ENCODE measurements at regions of chr5 and their contacts with region 1.

Region 1: DNA sequence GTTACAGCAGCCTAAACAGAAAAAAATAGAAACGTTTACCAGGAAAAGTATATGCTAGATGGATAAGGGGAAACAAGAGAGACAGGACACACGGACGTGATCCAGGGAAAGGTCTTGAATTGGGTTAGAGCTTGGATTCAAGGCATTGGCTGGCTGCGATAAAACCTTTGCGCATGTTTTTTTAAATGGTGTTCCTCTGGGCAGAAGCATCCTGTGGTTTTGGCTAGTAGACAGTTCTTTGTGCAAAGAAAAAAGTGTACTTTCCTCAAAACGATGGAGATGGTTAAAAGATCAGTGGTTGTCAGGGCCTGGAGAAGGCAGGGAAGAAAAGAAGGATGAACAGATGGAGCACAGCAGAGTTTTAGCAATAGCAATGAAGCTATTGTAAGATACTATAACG is 37.5 kb upstream of the LIFR start:
- DNase-seq: no peak
- H3K4me3 ChIP-seq: no peak overlapping the region
- H3K27ac ChIP-seq: no peak overlapping the region
- H3K4me1 ChIP-seq: no peaks in the 10 kb centered on the region
- H3K27me3 ChIP-seq: no peaks in the 10 kb centered on the region
- CTCF ChIP-seq: no peak
- EP300 ChIP-seq: no peak
- POLR2A ChIP-seq: no peak

Region 2: GRCh38 chr5:38621840-38622437 is 28.0 kb after region 1 on chr5:
- intact Hi-C with region 1: loop called in 1 of 4 experiments (anchors 1 kb)
- DNase-seq: no peak
- H3K4me3 ChIP-seq: no peak overlapping the region
- H3K27ac ChIP-seq: no peak overlapping the region
- H3K4me1 ChIP-seq: no peaks in the 10 kb centered on the region
- H3K27me3 ChIP-seq: no peaks in the 10 kb centered on the region
- CTCF ChIP-seq: no peak
- EP300 ChIP-seq: no peak
- POLR2A ChIP-seq: no peak

Region 3: DNA sequence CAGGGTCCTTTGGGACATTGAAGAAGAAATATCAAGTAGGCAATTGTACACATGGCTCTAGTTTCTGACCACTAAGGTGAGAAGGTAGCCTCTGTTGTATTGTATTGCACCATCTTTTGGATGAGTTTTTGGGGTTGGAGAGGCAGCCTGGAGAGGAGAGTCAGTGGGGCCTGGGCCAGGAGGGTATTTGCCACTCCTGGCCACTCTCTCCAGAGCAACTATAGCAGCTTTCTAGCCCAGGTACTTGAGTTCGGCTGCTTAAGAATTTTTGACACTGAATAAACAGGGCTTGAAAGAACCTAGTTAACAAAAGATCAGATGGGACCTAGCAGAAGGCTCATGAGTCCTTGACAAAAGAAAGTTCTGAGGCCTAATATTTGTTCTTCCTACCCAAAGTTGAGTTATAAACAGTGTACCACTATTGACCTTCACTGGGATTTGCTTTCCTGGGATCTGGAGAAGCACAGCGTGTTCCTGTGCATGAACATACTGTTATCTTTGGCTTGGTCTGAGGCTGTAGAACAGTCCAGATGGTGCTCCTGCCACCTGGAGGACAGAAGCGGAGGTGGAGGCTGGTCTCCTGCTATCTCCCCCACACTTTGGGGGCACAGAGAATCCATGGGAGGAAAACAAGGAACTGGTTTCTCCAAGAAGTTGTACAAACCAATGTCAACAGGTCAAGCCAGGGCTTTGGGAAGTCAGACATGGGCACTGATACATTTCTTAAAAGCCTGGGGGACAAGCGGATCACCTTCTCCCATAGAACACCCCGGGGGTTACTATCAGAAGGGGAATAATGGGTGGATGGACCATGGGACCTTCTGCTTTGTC is 72.9 kb after region 1 on chr5:
- intact Hi-C with region 1: no loop called
- DNase-seq: peak; percentile 23 to 71 (median 34)
- H3K4me3 ChIP-seq: no peak overlapping the region
- H3K27ac ChIP-seq: no peak overlapping the region
- H3K4me1 ChIP-seq: peaks cover 5% of the 10 kb centered on the region
- H3K27me3 ChIP-seq: no peaks in the 10 kb centered on the region
- CTCF ChIP-seq: peak in 1 of 3 donors; percentile 20
- EP300 ChIP-seq: no peak
- POLR2A ChIP-seq: no peak

Measured in ovary (tissue), 10 donors.